ENCODE measurements at regions of chr12 and their contacts with region 1.

Region 1: DNA sequence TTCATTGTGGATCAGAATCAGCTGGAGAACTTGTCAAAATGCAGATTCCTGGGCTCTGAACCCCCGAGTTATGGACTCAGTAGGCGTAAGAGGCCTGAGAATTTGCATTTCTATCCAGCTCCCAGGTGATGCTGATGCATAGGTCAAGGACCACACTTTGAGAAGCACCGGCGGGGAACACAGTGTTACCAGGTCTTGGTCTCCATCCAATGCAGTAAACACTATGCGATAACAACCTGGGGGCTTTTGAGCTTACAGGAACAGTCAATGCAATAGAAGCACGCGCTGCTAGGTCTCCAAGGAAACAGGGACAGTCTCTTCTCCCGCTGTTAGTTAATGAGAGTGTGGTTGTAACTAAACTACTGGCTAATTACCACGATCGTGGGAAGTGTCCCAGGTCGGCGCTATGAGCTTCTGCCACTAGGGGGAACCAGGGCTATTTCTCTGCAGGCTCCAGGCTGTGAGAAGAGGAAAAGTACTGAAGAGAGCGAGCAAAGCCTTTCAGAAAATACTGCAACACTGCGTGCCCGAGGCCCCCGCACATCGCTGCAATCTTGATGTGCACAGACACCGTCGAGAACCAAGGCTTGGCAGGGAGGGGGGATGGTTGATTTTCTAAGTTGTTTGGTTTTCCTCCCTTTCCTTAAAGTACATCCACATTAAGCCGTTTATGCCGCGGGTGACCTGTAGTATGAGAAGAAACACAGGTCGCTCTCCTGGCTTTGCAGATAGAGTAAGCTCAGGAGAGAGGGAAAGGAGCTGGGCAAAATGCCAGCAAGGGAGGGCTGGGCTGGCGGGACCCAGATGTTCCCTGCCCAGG is 52.0 kb upstream of the KCNA1 start:
- DNase-seq: peak; percentile 83
- ATAC-seq: peak; percentile 83
- H3K4me3 Mint-ChIP-seq: peak overlapping the region; percentile 47
- H3K27ac Mint-ChIP-seq: no peak overlapping the region
- H3K4me1 Mint-ChIP-seq: peaks cover 21% of the 10 kb centered on the region
- H3K27me3 Mint-ChIP-seq: peaks cover 17% of the 10 kb centered on the region

Region 2: GRCh38 chr12:4643747-4644146 is 213.9 kb before region 1 on chr12:
- CTCF ChIA-PET with region 1: no interaction called
- POLR2A ChIA-PET with region 1: no interaction called
- DNase-seq: no peak
- ATAC-seq: no peak
- H3K4me3 Mint-ChIP-seq: no peak overlapping the region
- H3K27ac Mint-ChIP-seq: no peak overlapping the region
- H3K4me1 Mint-ChIP-seq: peaks cover 8% of the 10 kb centered on the region
- H3K27me3 Mint-ChIP-seq: peaks cover 1% of the 10 kb centered on the region

Region 3: DNA sequence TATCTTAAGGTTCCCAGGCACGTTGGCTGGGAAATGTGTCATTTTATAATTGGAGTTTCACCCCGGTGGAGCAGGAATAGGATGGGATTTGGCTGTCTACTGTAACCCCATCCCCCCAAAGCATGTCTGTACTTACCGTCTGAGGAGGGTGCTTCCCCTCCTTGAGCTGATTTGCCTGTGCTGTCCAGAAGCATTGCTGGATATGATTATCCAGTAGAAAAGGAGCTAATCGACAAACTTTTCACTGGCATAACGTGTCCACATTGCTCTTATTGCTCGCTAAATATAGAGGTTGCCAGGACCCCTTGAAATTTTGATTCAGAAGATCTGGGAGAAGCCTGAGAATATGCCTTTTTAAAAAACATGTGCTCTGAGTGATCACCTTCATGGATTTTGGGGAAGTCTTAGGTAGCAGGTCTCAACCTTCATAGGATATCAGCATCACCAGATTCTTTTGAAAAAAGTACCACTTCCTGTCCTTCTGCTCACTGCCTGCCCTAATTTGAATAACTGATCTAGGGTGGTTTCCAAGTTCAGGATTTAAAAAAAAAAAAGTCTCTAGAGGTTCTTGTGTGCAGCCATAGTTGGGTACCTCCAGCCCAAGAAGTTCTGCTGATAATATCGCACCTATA is 28.4 kb before region 1 on chr12:
- CTCF ChIA-PET with region 1: interaction called, 78 read pairs
- POLR2A ChIA-PET with region 1: no interaction called
- DNase-seq: peak; percentile 43
- ATAC-seq: peak; percentile 73
- H3K4me3 Mint-ChIP-seq: peak overlapping the region; percentile 79
- H3K27ac Mint-ChIP-seq: peak overlapping the region; percentile 94
- H3K4me1 Mint-ChIP-seq: peaks cover 81% of the 10 kb centered on the region
- H3K27me3 Mint-ChIP-seq: no peaks in the 10 kb centered on the region

Region 4: DNA sequence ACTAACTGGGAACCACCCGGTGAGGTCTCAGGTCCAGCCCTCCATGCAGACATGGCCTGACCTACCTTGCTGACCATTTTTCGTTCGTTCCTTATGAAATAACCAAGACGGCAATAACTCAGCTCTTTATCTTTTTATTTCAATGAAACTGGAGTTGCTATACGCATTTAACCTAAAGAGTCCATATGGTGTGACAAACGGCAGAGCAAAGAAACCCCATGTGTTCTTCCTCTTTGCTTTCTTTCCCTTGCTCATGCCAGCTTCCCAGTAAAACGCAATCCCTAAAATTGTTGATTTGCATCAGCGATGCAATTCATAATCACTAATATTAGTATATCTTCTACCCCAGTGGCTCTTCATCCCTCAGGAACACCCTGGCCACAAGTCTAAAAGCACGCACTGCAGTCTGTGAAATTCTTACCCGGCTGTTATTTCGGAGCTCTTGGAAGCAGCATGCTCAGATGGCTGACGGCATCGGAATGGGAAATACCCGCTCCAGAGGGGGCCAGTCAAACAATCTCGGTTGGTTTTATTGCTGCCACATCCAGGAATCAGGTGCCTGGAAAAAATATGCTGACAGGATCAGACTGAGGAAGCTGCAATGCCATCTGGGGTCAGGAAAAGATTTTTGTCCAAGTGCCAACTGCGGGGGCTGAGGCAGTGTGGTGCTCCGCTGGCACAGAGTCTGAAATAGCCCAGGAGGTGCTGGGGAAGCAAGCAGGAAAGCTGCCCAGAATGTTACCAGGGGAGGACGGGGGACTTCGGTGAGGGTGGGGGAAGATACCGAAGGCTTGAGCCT is 23.8 kb after region 1 on chr12:
- CTCF ChIA-PET with region 1: interaction called, 15 read pairs
- POLR2A ChIA-PET with region 1: no interaction called
- DNase-seq: no peak
- ATAC-seq: no peak
- H3K4me3 Mint-ChIP-seq: no peak overlapping the region
- H3K27ac Mint-ChIP-seq: no peak overlapping the region
- H3K4me1 Mint-ChIP-seq: no peaks in the 10 kb centered on the region
- H3K27me3 Mint-ChIP-seq: peaks cover 13% of the 10 kb centered on the region

Region 5: GRCh38 chr12:5000204-5000603 is 142.5 kb after region 1 on chr12:
- CTCF ChIA-PET with region 1: interaction called, 21 read pairs
- POLR2A ChIA-PET with region 1: no interaction called
- DNase-seq: no peak
- ATAC-seq: no peak
- H3K4me3 Mint-ChIP-seq: no peak overlapping the region
- H3K27ac Mint-ChIP-seq: no peak overlapping the region
- H3K4me1 Mint-ChIP-seq: no peaks in the 10 kb centered on the region
- H3K27me3 Mint-ChIP-seq: peaks cover 6% of the 10 kb centered on the region